Calu3 (cell line): ENCODE measurements at regions of chr5 and their contacts with region 1.

Region 1: GRCh38 chr5:125412561-125413495 is 666.4 kb upstream of the ZNF608 start:
- DNase-seq: peak; percentile 87
- H3K4me3 Mint-ChIP-seq: peak overlapping the region; percentile 50
- H3K27ac Mint-ChIP-seq: peak overlapping the region; percentile 96
- H3K4me1 Mint-ChIP-seq: peaks cover 53% of the 10 kb centered on the region
- H3K27me3 Mint-ChIP-seq: no peaks in the 10 kb centered on the region
- CTCF ChIP-seq: no peak

Region 2: GRCh38 chr5:124661317-124662141 is 751.3 kb before region 1 on chr5:
- CTCF ChIA-PET with region 1: no interaction called
- intact Hi-C with region 1: loop called (anchors 2 kb)
- DNase-seq: peak; percentile 78
- H3K4me3 Mint-ChIP-seq: peak overlapping the region; percentile 69
- H3K27ac Mint-ChIP-seq: peak overlapping the region; percentile 98
- H3K4me1 Mint-ChIP-seq: peaks cover 58% of the 10 kb centered on the region
- H3K27me3 Mint-ChIP-seq: no peaks in the 10 kb centered on the region
- CTCF ChIP-seq: no peak

Region 3: DNA sequence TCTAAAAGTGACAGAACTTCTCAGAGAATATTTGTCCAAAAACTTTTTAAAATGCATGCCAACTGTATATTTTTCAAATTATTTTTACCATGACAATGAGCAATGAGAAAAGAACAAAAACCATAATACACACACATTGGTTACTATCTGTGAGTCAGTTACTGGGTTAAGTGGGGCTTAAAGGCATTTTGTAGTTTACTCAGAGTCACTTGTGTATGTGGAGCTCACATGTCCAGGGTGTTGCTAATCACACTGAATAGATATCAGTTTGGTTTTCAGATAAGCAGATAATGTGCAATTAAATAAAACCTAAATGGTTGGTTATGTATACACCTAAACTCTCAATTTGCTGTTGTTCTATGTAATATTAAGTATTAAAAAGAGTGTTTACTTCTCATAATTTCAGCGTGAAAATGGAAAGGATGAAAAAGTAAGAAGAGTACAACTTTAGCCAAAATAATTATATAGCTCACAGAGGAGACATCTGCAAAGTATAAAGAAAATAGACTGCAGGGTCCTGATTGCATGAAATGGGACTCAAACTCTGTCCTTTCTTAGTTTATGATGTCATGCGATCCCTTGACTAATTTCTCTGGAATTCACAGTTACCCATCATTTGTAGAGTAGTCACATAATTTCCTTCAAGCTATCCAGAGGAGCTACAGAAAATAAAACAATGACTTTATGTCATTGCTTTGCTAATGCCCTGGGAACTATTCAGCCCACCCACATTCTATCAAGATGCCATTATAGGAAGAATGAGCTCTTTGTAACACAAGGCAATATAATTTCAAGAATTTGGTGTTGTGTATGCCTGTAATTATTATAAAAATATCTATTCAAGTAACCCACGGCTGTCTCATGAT is 278.4 kb before region 1 on chr5:
- CTCF ChIA-PET with region 1: no interaction called
- intact Hi-C with region 1: loop called (anchors 5 kb)
- DNase-seq: peak; percentile 16
- H3K4me3 Mint-ChIP-seq: no peak overlapping the region
- H3K27ac Mint-ChIP-seq: no peak overlapping the region
- H3K4me1 Mint-ChIP-seq: peaks cover 19% of the 10 kb centered on the region
- H3K27me3 Mint-ChIP-seq: no peaks in the 10 kb centered on the region
- CTCF ChIP-seq: no peak

Region 4: GRCh38 chr5:125262782-125263181 is 150.0 kb before region 1 on chr5:
- CTCF ChIA-PET with region 1: no interaction called
- intact Hi-C with region 1: no loop called
- DNase-seq: no peak
- H3K4me3 Mint-ChIP-seq: no peak overlapping the region
- H3K27ac Mint-ChIP-seq: no peak overlapping the region
- H3K4me1 Mint-ChIP-seq: no peaks in the 10 kb centered on the region
- H3K27me3 Mint-ChIP-seq: no peaks in the 10 kb centered on the region
- CTCF ChIP-seq: no peak

Region 5: GRCh38 chr5:125277494-125278154 is 135.2 kb before region 1 on chr5:
- CTCF ChIA-PET with region 1: no interaction called
- intact Hi-C with region 1: loop called (anchors 5 kb)
- DNase-seq: peak; percentile 50
- H3K4me3 Mint-ChIP-seq: no peak overlapping the region
- H3K27ac Mint-ChIP-seq: peak overlapping the region; percentile 61
- H3K4me1 Mint-ChIP-seq: peaks cover 40% of the 10 kb centered on the region
- H3K27me3 Mint-ChIP-seq: no peaks in the 10 kb centered on the region
- CTCF ChIP-seq: no peak

Region 6: DNA sequence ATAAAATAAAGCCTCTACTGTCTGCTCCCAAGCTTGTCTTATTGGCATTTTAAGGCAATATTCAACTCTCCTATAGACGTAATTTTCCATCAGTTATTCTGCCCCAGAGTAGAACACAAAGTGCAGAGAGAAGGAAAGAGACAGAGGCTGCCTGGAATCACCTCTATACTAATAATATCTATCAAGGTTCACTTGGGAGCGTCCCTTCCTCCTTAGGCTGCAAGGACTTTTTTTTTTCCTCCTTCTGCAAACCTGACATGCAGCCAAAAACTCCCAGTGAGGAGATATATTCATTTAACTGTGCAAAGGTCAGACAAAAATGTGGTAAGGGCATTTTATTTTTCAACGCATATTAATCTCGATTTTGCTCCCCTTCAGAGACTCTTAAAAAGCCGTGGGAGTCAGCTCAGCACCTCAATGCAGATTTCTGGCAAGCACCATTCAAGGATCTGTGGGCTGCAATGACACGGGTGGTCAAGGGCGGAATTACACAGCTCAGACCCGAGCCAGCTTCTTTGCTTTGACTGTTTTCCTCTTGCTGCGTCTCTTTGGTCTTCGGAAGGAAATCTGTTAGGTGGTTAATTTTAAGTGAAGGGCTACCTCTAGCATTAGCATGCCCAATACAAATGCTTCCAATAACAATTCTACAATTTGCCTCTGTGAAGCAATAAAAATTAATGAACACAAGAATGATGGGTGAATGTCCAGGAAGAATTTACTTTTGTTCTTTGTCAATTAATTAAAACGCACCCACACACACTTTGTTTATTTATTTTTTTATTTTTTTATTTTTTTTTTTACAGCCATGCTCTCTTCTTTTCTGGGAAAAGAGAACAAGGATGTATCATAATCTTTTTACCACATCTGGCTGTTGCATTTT is 422.7 kb after region 1 on chr5:
- CTCF ChIA-PET with region 1: interaction called, 11 read pairs
- intact Hi-C with region 1: loop called (anchors 1 kb)
- DNase-seq: peak; percentile 62
- H3K4me3 Mint-ChIP-seq: no peak overlapping the region
- H3K27ac Mint-ChIP-seq: no peak overlapping the region
- H3K4me1 Mint-ChIP-seq: peaks cover 9% of the 10 kb centered on the region
- H3K27me3 Mint-ChIP-seq: no peaks in the 10 kb centered on the region
- CTCF ChIP-seq: peak; percentile 73